Ascending aorta (tissue), 2 donors: ENCODE measurements at regions of chr2 and their contacts with region 1.

Region 1: DNA sequence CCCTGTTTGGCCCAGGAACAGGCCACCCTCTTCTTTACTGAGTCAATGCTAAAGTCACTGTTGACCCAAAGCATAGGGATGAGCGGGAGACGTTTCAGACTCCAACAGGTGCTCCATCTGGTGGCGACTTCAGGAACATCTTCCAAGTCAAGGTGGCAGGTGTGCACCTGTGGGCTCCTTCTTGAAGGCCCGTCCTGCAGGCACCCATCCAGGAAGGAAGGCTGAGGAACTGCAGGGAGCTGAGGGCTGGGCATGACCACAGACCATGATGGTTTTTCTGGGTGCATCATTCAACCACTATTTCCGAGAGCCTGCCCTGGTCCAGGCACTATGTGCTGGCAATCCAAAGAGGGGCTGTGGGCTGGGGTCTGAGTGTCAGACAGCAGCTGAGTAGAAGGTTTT is 142.8 kb downstream of the NDUFA10 start:
- DNase-seq: peak in 1 of 2 donors; percentile 75
- H3K4me3 ChIP-seq: no peak overlapping the region
- H3K27ac ChIP-seq: peak overlapping the region; percentile 75 to 86
- H3K4me1 ChIP-seq: peaks cover 4 to 14% of the 10 kb centered on the region in 2 donors
- H3K27me3 ChIP-seq: no peaks in the 10 kb centered on the region
- CTCF ChIP-seq: peak; percentile 70 to 79 (median 71)

Region 2: GRCh38 chr2:239035361-239036078 is 846.8 kb before region 1 on chr2:
- intact Hi-C with region 1: loop called (anchors 1 kb)
- DNase-seq: no peak
- H3K4me3 ChIP-seq: no peak overlapping the region
- H3K27ac ChIP-seq: no peak overlapping the region
- H3K4me1 ChIP-seq: no peaks in the 10 kb centered on the region
- H3K27me3 ChIP-seq: no peaks in the 10 kb centered on the region
- CTCF ChIP-seq: peak; percentile 72 to 98 (median 94)

Region 3: GRCh38 chr2:239275044-239275685 is 607.2 kb before region 1 on chr2:
- intact Hi-C with region 1: loop called (anchors 5 kb)
- DNase-seq: peak; percentile 82 to 96
- H3K4me3 ChIP-seq: peak overlapping the region; percentile 18 to 50
- H3K27ac ChIP-seq: peak overlapping the region; percentile 68 to 81
- H3K4me1 ChIP-seq: peaks cover 13 to 32% of the 10 kb centered on the region in 2 donors
- H3K27me3 ChIP-seq: no peaks in the 10 kb centered on the region
- CTCF ChIP-seq: peak in 1 of 3 experiments; percentile 14

Region 4: GRCh38 chr2:239630618-239631286 is 251.6 kb before region 1 on chr2:
- intact Hi-C with region 1: loop called (anchors 2 kb)
- DNase-seq: peak in 1 of 2 donors; percentile 86
- H3K4me3 ChIP-seq: peak overlapping the region; percentile 14 to 31
- H3K27ac ChIP-seq: peak overlapping the region; percentile 26 to 71
- H3K4me1 ChIP-seq: peaks cover 0 to 6% of the 10 kb centered on the region in 2 donors
- H3K27me3 ChIP-seq: no peaks in the 10 kb centered on the region
- CTCF ChIP-seq: no peak

Region 5: DNA sequence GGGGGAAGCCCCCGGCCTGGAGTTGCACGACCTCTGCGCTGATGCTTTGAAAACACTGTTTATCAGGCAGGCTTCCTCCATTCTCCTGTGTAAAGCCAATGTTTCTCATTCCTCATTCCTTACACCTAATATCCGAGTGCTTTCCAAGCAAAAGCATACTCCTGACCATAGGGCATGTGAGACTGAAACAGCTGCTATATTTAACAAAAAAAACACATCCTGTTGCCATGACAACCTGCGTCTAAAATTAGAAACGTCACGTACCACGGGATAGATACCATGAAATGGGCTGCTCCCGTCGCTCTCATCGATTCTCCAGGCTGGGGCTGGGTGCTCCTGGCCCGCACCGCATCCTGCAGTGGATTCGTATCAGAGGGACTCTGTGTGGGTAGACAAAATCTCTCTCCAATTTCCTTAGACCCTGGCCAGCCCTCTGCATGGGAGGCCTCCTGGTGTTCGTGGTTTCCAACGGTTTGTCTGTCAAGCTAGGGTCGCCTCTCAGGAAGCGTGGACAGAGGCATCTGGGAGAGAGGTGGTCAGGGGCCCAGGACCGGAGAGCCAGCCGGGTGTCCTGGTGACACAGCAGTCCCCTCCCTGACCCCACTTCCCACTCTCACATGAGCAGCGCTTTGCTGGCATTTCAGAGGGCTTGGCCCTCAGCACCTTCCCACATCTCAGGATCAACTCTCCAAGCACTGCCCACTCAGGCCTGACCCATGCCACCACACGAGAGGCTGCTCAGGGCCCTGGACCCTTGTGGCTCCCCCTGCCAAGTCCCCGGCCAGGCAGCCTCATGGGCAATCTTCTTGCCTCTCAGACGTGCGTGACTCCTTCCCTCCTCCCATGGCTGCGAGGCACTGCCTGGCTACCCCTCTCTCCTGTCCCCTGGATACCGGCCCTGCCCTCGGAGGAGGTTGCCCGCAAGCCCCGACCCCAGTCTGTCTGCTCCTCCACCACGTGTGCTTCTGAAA is 125.3 kb before region 1 on chr2:
- intact Hi-C with region 1: loop called (anchors 2 kb)
- DNase-seq: peak in 1 of 2 donors; percentile 81
- H3K4me3 ChIP-seq: no peak overlapping the region
- H3K27ac ChIP-seq: peak overlapping the region; percentile 89 to 93
- H3K4me1 ChIP-seq: peaks cover 15 to 42% of the 10 kb centered on the region in 2 donors
- H3K27me3 ChIP-seq: no peaks in the 10 kb centered on the region
- CTCF ChIP-seq: no peak

Region 6: DNA sequence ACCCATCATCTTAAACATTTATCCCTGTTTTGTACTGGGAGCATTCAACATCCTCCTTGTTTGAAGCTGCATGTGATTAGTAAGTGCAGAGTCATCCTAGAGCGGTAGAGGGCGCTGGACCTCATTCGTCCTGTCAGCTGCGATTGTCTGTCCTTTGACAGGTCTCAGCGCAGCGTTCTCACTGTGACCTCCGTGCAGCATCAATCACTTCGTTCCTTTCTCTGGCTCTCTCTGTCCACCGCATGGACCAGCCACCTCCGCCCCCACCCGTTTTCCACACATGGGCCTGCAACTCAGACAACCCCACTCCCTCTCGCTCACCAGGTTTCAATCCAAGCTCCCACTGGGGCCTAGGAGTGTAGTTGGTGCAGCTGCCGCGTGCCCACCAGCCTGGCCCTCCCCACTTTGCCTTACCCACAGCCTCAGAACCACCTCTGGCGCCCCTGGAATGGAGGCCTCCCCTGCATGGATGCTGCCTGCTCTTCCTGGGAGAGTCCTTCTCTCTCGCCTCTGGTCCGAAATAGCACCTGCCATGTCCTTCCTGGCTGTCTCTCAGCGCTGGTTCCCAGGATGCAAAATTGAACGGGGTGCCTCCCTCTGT is 52.3 kb after region 1 on chr2:
- intact Hi-C with region 1: no loop called
- DNase-seq: peak in 1 of 2 donors; percentile 83
- H3K4me3 ChIP-seq: no peak overlapping the region
- H3K27ac ChIP-seq: no peak overlapping the region
- H3K4me1 ChIP-seq: no peaks in the 10 kb centered on the region
- H3K27me3 ChIP-seq: no peaks in the 10 kb centered on the region
- CTCF ChIP-seq: peak; percentile 62 to 74 (median 66)